Caco-2 (cell line): ENCODE measurements at regions of chr2 and their contacts with region 1.

Region 1: GRCh38 chr2:163768881-163769695 is 33.3 kb upstream of the FIGN start:
- DNase-seq: no peak
- H3K4me3 ChIP-seq: no peak overlapping the region
- H3K4me3 Mint-ChIP-seq: no peak overlapping the region
- H3K27ac Mint-ChIP-seq: no peak overlapping the region
- H3K4me1 ChIP-seq: no peaks in the 10 kb centered on the region
- H3K4me1 Mint-ChIP-seq: no peaks in the 10 kb centered on the region
- H3K27me3 ChIP-seq: no peaks in the 10 kb centered on the region
- H3K27me3 Mint-ChIP-seq: peaks cover 2% of the 10 kb centered on the region
- CTCF ChIP-seq: no peak

Region 2: GRCh38 chr2:163878531-163879117 is 109.5 kb after region 1 on chr2:
- CTCF ChIA-PET with region 1: no interaction called
- POLR2A ChIA-PET with region 1: no interaction called
- intact Hi-C with region 1: loop called (anchors 5 kb)
- DNase-seq: peak in 1 of 2 experiments; percentile 15
- H3K4me3 ChIP-seq: no peak overlapping the region
- H3K4me3 Mint-ChIP-seq: no peak overlapping the region
- H3K27ac Mint-ChIP-seq: peak overlapping the region; percentile 11
- H3K4me1 ChIP-seq: peaks cover 21% of the 10 kb centered on the region
- H3K4me1 Mint-ChIP-seq: peaks cover 15% of the 10 kb centered on the region
- H3K27me3 ChIP-seq: no peaks in the 10 kb centered on the region
- H3K27me3 Mint-ChIP-seq: no peaks in the 10 kb centered on the region
- CTCF ChIP-seq: peak; percentile 31 to 49

Region 3: GRCh38 chr2:163897799-163898198 is 128.7 kb after region 1 on chr2:
- CTCF ChIA-PET with region 1: no interaction called
- POLR2A ChIA-PET with region 1: no interaction called
- intact Hi-C with region 1: no loop called
- DNase-seq: no peak
- H3K4me3 ChIP-seq: no peak overlapping the region
- H3K4me3 Mint-ChIP-seq: no peak overlapping the region
- H3K27ac Mint-ChIP-seq: no peak overlapping the region
- H3K4me1 ChIP-seq: no peaks in the 10 kb centered on the region
- H3K4me1 Mint-ChIP-seq: no peaks in the 10 kb centered on the region
- H3K27me3 ChIP-seq: no peaks in the 10 kb centered on the region
- H3K27me3 Mint-ChIP-seq: no peaks in the 10 kb centered on the region
- CTCF ChIP-seq: no peak